CD8-positive, alpha-beta memory T cell (primary cell): ENCODE measurements at regions of chr11 and their contacts with region 1.

Region 1: DNA sequence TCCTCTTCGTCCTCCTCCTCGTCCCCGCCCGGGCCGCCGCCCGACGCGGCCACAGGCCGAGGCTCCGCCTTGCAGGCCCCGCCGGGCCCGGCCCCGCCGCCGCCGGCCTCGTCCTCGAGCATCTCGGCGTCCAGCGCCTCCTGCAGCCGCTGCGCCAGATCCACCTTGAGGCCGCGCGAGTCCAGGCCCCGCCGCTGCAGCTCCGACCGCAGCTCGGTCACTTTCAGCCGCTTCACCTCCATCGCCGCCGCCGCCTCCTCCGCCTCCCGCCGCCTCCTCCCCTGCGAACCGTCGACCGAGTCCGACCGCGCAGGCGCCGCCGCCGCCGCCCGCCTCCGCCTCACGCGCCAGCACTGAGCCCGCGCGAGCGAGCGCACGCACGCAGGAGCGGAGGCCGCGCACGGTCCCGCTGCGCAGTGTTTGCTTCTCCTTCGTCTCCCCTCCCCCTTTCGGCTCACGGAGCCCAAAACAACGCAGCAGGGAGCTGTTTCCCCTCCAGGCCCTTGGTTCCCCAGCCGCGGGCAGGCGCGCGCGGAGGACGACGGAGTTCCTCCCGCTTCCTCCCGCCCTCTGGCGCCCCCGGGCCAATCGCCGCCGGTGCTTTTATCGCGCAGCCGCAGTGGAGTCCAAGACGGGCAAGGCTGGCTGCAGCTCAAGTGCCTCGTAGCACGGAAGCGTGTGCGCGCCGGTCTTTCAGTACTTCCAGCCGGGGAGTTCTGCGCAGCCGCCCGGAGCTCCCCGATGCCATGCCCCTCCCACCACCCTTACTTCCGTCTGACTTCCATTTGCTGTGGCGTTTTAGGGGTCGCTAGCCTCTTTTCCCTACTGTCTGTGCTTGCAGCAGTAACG is at the start of gene HNRNPUL2:
- DNase-seq: peak; percentile 98 to 99 (median 99)
- H3K4me3 ChIP-seq: peak within 1 kb of the TSS; percentile 99
- H3K4me3 Mint-ChIP-seq: peak within 1 kb of the TSS; percentile 92 to 99 (median 98)
- H3K27ac ChIP-seq: peak within 1 kb of the TSS; percentile 90
- H3K27ac Mint-ChIP-seq: peak within 1 kb of the TSS; percentile 95 to 99 (median 98)
- H3K4me1 ChIP-seq: peaks cover 43% of the 10 kb centered on the region
- H3K4me1 Mint-ChIP-seq: peaks cover 55 to 64% (median 63%) of the 10 kb centered on the region in 3 donors
- H3K27me3 ChIP-seq: no peaks in the 10 kb centered on the region
- H3K27me3 Mint-ChIP-seq: peaks cover 0 to 3% of the 10 kb centered on the region in 2 donors
- total RNA-seq, gene HNRNPUL2: 58.7 to 64.3 TPM

Region 2: DNA sequence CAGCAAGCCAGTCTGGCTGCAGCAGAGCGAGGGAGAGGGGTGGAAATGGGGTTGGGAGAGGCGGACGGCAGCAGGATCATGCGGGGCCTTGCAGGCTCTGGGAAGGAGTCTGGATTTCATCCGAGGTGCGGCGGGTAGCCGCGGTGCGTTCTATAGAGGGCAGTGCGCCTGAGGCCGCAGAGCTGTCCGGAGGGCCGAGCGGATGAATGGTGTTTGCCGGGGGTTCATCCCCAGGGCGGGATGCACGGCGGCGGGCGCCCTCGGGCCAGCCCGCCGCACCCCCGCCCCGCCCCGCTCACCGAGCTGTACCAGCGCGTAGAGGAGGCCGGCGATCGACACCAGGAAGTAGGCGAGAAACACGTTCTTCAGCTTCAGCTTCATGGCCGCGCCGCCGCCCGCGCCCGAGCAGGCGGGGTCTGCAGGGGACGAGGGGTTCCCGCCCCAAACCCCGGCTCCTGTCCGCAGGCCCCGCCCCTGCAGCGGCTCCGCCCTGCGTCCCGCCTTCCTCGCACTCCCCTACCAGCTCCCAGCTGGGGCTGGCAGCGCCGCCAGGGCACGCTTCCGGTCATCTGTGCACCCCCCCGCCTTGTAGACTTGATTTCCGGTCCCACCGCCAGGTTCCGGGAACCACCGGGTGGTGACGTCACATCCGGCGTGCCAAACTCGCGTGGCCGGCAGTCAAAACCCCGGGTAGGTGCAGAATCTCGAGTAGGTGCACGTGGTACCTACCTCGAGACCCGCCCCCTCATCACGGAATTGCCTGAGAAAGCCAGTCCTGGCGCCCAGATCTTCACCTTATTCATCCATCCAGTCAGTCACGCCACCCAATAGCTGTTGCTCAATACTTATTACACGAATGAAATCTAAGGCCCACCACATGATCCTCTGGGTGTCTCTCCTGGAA is 105.3 kb before region 1 on chr11 and contains the start of gene B3GAT3:
- CTCF ChIA-PET with region 1: no interaction called
- POLR2A ChIA-PET with region 1: interaction called, 11 read pairs
- DNase-seq: peak; percentile 95 to 98 (median 97)
- H3K4me3 ChIP-seq: peak within 1 kb of the TSS; percentile 94
- H3K4me3 Mint-ChIP-seq: peak within 1 kb of the TSS; percentile 90 to 96 (median 94)
- H3K27ac ChIP-seq: peak within 1 kb of the TSS; percentile 80
- H3K27ac Mint-ChIP-seq: peak within 1 kb of the TSS; percentile 89 to 100 (median 97)
- H3K4me1 ChIP-seq: peaks cover 16% of the 10 kb centered on the region
- H3K4me1 Mint-ChIP-seq: peaks cover 15 to 28% (median 26%) of the 10 kb centered on the region in 3 donors
- H3K27me3 ChIP-seq: no peaks in the 10 kb centered on the region
- H3K27me3 Mint-ChIP-seq: peaks cover 0 to 1% of the 10 kb centered on the region in 2 donors
- total RNA-seq, gene B3GAT3: 67.4 to 68.2 TPM

Region 3: GRCh38 chr11:62705880-62706849 is 21.0 kb before region 1 on chr11:
- CTCF ChIA-PET with region 1: interaction called, 13 read pairs
- POLR2A ChIA-PET with region 1: interaction called, 42 read pairs
- DNase-seq: peak; percentile 92 to 98 (median 95)
- H3K4me3 ChIP-seq: peak overlapping the region; percentile 88
- H3K4me3 Mint-ChIP-seq: peak overlapping the region; percentile 86 to 95 (median 89)
- H3K27ac ChIP-seq: peak overlapping the region; percentile 95
- H3K27ac Mint-ChIP-seq: peak overlapping the region; percentile 92 to 99 (median 94)
- H3K4me1 ChIP-seq: peaks cover 48% of the 10 kb centered on the region
- H3K4me1 Mint-ChIP-seq: peaks cover 36 to 49% (median 41%) of the 10 kb centered on the region in 3 donors
- H3K27me3 ChIP-seq: no peaks in the 10 kb centered on the region
- H3K27me3 Mint-ChIP-seq: no peaks in the 10 kb centered on the region

Region 4: DNA sequence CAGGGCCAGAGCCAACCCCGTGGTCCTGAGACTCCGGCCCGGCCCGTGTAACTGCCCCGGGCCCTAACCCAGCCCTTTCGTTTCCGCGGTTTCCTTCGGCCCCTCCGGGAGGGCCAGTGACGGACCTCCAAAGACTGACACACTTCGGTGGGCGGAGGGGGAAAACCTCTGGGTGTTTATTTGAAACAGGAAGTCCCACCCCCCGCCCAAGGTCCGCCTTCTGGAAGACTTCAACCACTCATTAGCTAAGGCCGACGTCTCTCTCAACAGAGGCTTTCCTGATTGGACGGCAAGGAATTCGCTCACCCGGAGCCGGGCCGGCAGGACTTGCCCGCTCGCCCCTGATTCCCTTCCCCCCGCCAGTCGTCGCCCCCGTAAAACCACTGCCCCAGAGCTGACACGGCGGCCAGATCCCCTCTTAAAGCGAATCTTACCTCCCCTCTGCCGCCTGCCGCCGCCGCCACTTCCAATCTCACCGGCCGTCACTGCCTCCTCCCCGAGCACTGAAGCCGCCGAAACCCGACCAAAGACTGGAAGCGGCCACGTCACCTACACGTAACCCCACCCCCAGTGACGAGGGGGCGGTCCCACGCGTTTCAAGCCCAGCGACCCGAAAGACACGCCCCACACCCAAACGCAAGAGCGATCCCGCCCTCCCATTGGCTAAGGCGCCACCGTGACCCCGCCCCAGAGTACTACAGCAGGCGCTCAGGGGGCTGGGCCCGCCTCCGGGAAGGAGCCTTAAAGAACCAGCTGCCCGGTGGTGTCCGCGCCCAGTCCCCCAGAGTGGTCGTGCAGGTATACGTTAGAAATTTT is 104.6 kb after region 1 on chr11 and contains the start of gene STX5:
- CTCF ChIA-PET with region 1: no interaction called
- POLR2A ChIA-PET with region 1: interaction called, 12 read pairs
- DNase-seq: peak; percentile 99 to 100 (median 99)
- H3K4me3 ChIP-seq: peak within 1 kb of the TSS; percentile 96
- H3K4me3 Mint-ChIP-seq: peak within 1 kb of the TSS; percentile 93 to 100 (median 97)
- H3K27ac ChIP-seq: peak within 1 kb of the TSS; percentile 98
- H3K27ac Mint-ChIP-seq: peak within 1 kb of the TSS; percentile 96 to 100 (median 98)
- H3K4me1 ChIP-seq: peaks cover 29% of the 10 kb centered on the region
- H3K4me1 Mint-ChIP-seq: peaks cover 22 to 55% (median 35%) of the 10 kb centered on the region in 3 donors
- H3K27me3 ChIP-seq: no peaks in the 10 kb centered on the region
- H3K27me3 Mint-ChIP-seq: no peaks in the 10 kb centered on the region
- total RNA-seq, gene STX5: 34.7 to 35.3 TPM

Region 5: DNA sequence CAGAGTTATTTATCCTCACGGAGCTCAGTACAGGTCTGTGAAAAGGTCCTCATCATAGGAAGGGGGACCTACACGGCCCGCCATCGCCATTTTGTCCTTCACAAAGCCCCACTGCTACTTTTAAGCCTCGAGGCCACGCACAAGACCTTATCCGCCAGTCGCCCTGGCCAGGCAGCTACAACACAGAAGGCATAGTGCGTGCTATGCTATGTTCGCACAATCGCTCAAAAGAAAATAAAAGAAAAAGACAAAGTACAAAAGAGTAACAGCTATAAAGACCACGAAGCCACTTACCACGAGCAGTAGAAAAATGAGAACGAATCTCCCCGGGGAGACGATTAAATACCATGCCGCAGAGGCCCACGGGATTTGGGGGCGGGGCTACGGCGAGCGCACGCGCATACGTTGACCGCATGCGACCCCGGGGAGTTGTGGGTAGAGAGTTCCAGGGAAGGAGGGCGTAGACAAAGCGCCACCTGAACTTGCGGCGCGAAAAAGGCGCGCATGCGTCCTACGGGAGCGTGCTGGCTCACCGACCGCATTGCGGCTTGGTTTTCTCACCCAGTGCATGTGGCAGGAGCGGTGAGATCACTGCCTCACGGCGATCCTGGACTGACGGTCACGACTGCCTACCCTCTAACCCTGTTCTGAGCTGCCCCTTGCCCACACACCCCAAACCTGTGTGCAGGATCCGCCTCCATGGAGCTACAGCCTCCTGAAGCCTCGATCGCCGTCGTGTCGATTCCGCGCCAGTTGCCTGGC is 128.6 kb after region 1 on chr11:
- CTCF ChIA-PET with region 1: interaction called, 6 read pairs
- POLR2A ChIA-PET with region 1: interaction called, 33 read pairs
- DNase-seq: peak; percentile 94 to 99 (median 98)
- H3K4me3 ChIP-seq: peak overlapping the region; percentile 98
- H3K4me3 Mint-ChIP-seq: peak overlapping the region; percentile 94 to 99 (median 98)
- H3K27ac ChIP-seq: peak overlapping the region; percentile 94
- H3K27ac Mint-ChIP-seq: peak overlapping the region; percentile 84 to 96 (median 94)
- H3K4me1 ChIP-seq: peaks cover 47% of the 10 kb centered on the region
- H3K4me1 Mint-ChIP-seq: peaks cover 46 to 63% (median 55%) of the 10 kb centered on the region in 3 donors
- H3K27me3 ChIP-seq: no peaks in the 10 kb centered on the region
- H3K27me3 Mint-ChIP-seq: peaks cover 0 to 6% of the 10 kb centered on the region in 2 donors